AG04450 (cell line): ENCODE measurements at regions of chr14 and their contacts with region 1.

Region 1: GRCh38 chr14:69483765-69484443 is 624 bp upstream of the PLEKHD1 start:
- DNase-seq: no peak
- H3K4me3 ChIP-seq: peak overlapping the region; percentile 10
- H3K27ac ChIP-seq: no peak overlapping the region
- H3K27me3 ChIP-seq: peaks cover 72% of the 10 kb centered on the region
- CTCF ChIP-seq: no peak

Region 2: GRCh38 chr14:69312608-69313007 is 171.3 kb before region 1 on chr14:
- CTCF ChIA-PET with region 1: interaction called, 11 read pairs
- POLR2A ChIA-PET with region 1: no interaction called
- DNase-seq: no peak
- H3K4me3 ChIP-seq: no peak overlapping the region
- H3K27ac ChIP-seq: no peak overlapping the region
- H3K27me3 ChIP-seq: peaks cover 10% of the 10 kb centered on the region
- CTCF ChIP-seq: no peak

Region 3: DNA sequence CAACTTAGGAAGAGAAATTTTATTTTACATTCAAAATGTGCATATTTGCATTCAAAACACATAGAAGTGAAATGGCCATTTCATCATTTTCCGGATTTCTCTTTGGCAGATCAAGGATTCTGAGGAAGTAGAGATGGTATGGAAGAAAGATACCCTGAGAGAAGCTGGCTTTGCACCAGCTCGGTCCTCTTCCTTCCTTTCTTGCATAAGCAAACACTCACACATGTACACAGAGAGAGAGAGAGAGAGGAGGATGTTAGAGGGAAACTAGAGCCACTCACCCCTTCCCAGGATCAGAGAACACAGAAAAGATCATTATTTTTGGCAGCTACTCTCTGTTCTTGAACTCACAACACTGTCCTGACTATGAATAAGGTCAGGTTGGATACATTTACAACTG is 15.0 kb before region 1 on chr14:
- CTCF ChIA-PET with region 1: no interaction called
- POLR2A ChIA-PET with region 1: no interaction called
- DNase-seq: no peak
- H3K4me3 ChIP-seq: no peak overlapping the region
- H3K27ac ChIP-seq: peak overlapping the region; percentile 31
- H3K27me3 ChIP-seq: no peaks in the 10 kb centered on the region
- CTCF ChIP-seq: no peak

Region 4: GRCh38 chr14:69501423-69501838 is 17.5 kb after region 1 on chr14:
- CTCF ChIA-PET with region 1: interaction called, 10 read pairs
- POLR2A ChIA-PET with region 1: no interaction called
- DNase-seq: no peak
- H3K4me3 ChIP-seq: no peak overlapping the region
- H3K27ac ChIP-seq: no peak overlapping the region
- H3K27me3 ChIP-seq: peaks cover 40% of the 10 kb centered on the region
- CTCF ChIP-seq: no peak